HEK293 (cell line): ENCODE measurements at regions of chr1 and their contacts with region 1.

Region 1: DNA sequence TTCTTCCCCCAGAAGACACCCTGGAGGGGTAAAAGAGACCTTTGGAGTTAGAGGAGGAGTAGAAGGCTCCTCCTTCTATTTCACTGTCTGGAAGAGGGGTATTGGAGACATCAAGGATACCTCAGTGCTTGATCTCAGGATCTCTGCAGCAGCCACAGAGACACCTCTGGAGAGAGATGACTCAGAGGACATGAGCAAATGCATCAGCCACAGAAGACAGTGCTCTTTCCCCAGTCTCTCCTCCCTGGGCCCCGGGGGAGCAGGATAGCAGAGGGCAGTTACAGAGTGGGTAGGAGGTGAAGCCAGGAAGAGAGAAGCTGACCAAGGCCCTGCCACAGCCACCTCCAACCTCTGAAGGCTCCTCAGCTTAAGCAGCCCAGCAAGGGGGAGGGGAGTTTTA is 15.3 kb upstream of the TEDDM1 start:
- H3K4me3 ChIP-seq: no peak overlapping the region
- H3K27ac ChIP-seq: no peak overlapping the region
- H3K4me1 ChIP-seq: no peaks in the 10 kb centered on the region
- CTCF ChIP-seq: no peak

Region 2: GRCh38 chr1:182357913-182358312 is 57.9 kb before region 1 on chr1:
- CTCF ChIA-PET with region 1: no interaction called
- POLR2A ChIA-PET with region 1: no interaction called
- H3K4me3 ChIP-seq: no peak overlapping the region
- H3K27ac ChIP-seq: no peak overlapping the region
- H3K4me1 ChIP-seq: no peaks in the 10 kb centered on the region
- CTCF ChIP-seq: no peak

Region 3: DNA sequence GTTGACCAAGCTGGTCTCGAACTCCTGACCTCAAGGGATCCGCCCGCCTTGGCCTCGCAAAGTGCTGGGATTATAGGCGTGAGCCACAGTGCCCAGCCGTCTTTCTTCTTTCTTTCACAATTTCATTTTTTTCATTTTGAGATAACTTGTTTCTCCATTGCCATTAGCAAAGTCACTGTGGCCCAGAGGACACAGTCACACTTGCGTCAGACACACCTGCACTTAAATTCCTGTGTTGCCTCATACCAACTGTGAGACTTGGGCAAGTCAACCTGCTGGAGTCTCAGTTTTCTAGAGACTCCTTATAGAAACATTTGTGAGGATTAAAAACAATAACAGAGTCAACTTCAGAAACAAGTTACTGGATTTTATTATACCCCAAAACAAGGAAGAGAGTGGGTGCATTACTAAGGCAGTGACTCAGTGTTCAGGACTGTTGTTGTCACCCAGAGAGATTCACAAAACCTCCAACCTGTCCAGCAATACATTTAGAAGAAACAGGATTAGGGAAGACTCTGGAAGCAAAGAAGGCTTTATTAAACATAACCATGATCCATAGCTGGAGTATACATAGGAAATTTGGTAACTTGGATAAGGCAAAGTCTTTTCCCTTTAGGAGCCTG is 17.9 kb before region 1 on chr1:
- CTCF ChIA-PET with region 1: interaction called, 10 read pairs
- POLR2A ChIA-PET with region 1: no interaction called
- H3K4me3 ChIP-seq: no peak overlapping the region
- H3K27ac ChIP-seq: no peak overlapping the region
- H3K4me1 ChIP-seq: peaks cover 4% of the 10 kb centered on the region; the same call in 1 of the 2 replicates
- CTCF ChIP-seq: no peak

Region 4: DNA sequence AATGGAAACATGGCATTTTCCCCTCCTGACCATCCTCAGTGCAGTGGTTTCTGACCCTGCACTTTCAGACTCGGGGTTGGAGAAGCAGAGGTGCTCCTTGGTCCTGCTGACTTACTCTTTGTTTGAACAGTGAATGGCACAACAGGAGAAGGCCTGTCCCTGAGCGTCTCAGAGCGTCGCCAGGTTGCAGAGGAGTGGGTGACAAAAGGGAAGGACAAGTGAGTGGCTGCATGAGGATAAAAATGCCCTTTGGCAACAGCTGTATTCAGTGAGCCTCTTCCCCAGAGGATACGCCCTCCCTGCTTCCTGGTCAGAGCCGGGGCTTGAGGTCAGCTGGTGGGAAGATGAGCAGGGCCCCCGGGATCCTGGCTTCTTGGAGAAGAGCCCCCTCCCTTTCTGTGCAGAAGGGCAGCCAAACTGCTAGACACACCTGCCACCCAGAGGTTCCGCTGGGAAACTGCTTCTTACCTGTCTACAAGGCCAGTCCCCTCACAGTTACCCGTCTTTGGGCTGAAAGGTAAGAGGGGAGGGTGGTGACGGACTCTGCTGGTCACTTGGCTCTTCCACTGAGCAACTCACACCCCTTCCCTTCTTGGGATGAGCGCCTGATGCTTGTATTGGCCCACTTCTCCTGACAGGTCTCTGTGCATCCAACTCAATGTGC is 390.4 kb after region 1 on chr1:
- CTCF ChIA-PET with region 1: no interaction called
- POLR2A ChIA-PET with region 1: no interaction called
- H3K4me3 ChIP-seq: no peak overlapping the region
- H3K27ac ChIP-seq: no peak overlapping the region
- H3K4me1 ChIP-seq: no peaks in the 10 kb centered on the region
- CTCF ChIP-seq: no peak